Right ventricle myocardium inferior (tissue), 1 donor: ENCODE measurements at regions of chr5 and their contacts with region 1.

Region 1: DNA sequence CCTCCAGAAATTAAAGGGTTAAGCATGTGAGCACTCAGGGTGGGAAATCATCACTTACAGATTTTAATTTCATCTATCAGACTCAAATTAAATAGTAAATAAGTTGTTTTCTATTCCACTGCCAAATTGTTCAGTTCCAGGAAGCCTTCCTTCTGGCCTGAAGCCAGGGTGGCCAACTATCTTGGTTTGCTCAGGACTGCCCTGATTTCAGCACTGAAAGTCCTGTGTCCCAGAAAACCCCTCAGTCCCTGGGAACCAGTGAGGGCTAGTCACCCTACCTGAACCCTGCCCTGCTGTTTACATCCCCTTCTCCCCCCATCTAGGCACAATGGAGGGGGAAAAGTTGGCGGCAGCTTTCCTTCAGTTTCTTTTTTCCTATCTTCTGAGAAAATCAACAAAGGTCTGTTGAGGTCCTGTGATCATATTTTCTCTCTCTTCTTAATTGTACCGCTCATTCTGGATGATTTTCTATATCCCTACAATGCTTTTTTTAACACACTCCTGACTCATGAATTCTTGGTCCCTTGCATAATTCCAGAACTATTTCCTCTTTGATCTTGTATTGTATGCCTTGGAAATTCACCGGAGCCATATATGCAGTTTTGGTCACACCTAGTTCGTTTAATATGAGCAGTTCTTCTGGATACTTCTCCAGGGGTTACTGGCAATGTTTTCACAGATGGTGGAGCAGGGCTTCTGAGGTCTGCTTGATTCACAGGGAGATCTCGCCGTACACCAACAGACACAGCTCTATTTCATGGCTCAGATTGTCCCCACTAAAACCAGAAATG is 103.8 kb downstream of the MAP1B start:
- DNase-seq: no peak
- ATAC-seq: peak; percentile 52

Region 2: DNA sequence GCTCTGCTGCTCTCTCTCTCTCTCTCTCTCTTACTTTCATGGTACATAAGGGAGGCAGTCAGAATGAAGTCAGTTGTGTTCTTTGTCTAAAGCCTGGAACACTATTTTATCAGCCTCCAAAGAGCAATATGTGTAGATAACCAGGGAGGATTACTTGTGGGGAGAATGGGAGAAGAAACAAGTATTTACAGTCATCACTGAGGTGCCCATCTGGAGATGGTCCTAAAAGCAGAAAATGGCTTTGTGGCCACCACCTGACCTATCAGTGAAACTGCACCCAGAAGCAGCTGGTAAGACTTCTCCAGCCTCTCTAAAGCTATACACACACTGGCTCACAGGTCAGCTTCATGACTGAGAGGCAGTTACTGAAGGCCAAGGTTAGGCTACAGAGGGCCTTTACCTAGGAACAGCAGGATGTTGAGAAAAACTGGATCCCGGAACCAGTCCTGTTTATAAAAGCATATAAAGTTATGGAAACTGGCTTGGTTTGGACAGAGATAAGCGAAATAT is 33.8 kb after region 1 on chr5:
- intact Hi-C with region 1: loop called (anchors 5 kb)
- DNase-seq: no peak
- ATAC-seq: peak; percentile 71

Region 3: GRCh38 chr5:72256536-72256935 is 45.5 kb after region 1 on chr5:
- intact Hi-C with region 1: no loop called
- DNase-seq: no peak
- ATAC-seq: no peak